Gastrocnemius medialis (tissue), 4 donors: ENCODE measurements at regions of chr2 and their contacts with region 1.

Region 1: DNA sequence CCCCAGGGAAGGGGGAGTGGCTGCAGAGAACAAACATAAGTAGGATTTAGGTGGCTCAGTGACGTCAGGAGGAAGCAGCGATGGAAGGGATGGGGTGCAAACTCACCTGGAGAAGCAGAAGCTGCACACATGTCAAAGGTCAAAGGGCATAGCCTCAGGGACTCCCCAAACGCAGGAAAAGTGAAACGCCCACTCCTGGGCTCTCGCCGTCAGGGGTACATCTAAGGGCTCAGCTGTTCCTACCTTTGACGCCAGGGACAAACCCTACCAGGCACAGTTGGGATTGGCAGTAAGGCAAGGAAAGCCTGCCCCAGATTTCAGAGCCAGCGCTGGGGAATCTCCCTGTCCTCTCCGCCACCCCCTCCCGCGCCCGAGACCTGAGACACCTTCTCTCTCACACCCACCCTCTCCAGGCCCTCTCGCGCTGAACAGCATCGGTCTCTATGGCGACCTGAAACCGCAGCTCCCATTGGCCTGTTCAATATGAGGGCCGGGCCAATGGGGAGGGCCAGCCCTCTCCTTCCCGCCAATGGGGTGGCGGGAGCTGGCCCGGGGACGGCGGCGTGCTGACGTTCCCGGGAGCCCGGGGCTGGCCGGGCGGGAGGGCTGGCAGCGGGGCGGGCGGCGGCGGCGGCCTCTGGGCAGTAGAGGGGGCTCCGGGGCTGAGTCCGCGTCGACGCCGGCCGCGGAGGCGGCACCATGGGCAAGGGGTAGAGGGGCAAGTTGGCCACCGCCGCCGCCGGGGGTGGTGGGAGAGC is at the starts of genes CCDC148 and PKP4:
- DNase-seq: peak; percentile 81 to 85
- ATAC-seq: peak; percentile 85 to 89
- H3K4me3 ChIP-seq: peak within 1 kb of the TSS; percentile 79 to 91 (median 80)
- H3K27ac ChIP-seq: peak within 1 kb of the TSS; percentile 83 to 96 (median 90)
- H3K4me1 ChIP-seq: peaks cover 18 to 24% of the 10 kb centered on the region in 2 donors
- H3K27me3 ChIP-seq: no peaks in the 10 kb centered on the region
- CTCF ChIP-seq: peak in 3 of 5 experiments; percentile 10 to 42 (median 16)
- POLR2A ChIP-seq: peak; percentile 55 to 64
- total RNA-seq, gene CCDC148: 0.66 TPM in 1 of 4 donors, not detected in the others
- total RNA-seq, gene PKP4: 15.3 to 36.0 (median 25.6) TPM

Region 2: DNA sequence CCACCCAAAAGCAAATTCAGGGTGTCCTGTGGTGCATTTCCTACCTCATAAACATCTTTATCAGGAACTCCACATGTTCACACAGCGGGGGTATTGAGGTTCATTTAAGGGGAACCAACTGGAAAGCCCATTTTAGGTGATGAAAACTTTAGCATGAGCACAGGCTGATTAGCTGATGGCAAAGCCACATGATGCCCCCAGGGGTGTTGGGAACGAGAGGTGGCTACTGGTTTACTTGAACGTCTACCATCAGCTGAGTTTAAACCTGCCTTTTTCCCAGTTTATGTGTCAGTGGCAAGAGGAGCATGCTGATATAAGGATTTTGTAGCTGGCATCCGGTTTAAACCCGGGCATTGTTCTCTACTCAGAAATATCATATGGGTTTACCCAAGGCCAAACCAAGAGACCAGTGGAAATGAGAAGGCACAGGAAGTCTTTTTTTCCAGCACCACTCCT is 409.3 kb before region 1 on chr2:
- in situ Hi-C with region 1: no loop called
- intact Hi-C with region 1: no loop called
- DNase-seq: no peak
- ATAC-seq: no peak
- H3K4me3 ChIP-seq: no peak overlapping the region
- H3K27ac ChIP-seq: no peak overlapping the region
- H3K4me1 ChIP-seq: peaks cover 0 to 6% of the 10 kb centered on the region in 2 donors
- H3K27me3 ChIP-seq: no peaks in the 10 kb centered on the region
- CTCF ChIP-seq: no peak
- POLR2A ChIP-seq: no peak

Region 3: DNA sequence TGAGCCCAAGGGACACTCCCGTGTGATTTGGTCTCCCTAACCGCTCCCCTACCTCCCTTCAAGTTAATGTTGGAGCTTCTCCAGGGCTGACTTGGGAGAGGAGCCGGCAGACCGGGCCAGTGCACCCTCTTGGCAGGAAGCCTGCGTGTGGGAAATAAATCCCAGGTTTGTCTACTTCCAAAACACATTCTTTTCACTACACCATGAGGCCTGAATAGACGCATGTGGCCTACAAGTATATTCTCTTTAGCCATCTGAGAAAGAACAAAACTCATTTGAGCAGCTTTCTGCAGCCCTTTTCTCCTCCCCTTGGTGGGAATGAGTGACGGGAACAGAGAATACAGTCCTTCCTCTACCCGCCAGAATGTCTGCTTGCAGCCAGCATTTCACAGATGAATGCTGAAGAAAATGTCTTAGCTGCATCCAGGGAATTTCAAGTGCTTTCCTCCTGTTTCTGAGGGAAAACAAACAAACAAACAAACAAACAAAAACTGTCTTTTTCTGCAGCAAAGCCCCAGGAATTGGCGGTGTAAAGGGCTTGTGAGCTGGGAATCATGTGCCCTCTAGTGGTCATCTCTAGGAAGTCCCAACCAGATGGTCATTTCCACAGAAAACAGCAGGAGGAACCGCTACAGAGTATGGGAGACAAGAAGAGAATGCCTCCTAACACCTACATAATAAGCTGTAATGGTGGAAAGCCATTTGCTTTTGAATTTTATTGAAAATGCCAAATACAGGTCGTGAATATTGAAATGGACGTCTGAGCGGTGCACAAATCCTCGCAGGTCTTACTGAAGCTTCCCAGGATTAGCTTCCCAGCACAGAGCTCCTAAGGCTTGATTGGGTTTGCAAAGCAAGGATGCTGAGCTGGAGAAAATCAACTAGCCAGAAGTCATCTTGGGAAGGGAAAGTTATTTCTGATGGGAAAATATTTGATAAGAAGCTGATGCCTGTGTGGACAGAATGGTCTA is 297.4 kb after region 1 on chr2:
- in situ Hi-C with region 1: no loop called
- intact Hi-C with region 1: loop called (anchors 5 kb)
- DNase-seq: no peak
- ATAC-seq: peak; percentile 88 to 91
- H3K4me3 ChIP-seq: peak overlapping the region; percentile 37 to 46 (median 42)
- H3K27ac ChIP-seq: no peak overlapping the region
- H3K4me1 ChIP-seq: peaks cover 4% of the 10 kb centered on the region in 2 donors
- H3K27me3 ChIP-seq: no peaks in the 10 kb centered on the region
- CTCF ChIP-seq: peak; percentile 74 to 89 (median 77)
- POLR2A ChIP-seq: no peak